ENCODE measurements at regions of chr14 and their contacts with region 1.

Region 1: DNA sequence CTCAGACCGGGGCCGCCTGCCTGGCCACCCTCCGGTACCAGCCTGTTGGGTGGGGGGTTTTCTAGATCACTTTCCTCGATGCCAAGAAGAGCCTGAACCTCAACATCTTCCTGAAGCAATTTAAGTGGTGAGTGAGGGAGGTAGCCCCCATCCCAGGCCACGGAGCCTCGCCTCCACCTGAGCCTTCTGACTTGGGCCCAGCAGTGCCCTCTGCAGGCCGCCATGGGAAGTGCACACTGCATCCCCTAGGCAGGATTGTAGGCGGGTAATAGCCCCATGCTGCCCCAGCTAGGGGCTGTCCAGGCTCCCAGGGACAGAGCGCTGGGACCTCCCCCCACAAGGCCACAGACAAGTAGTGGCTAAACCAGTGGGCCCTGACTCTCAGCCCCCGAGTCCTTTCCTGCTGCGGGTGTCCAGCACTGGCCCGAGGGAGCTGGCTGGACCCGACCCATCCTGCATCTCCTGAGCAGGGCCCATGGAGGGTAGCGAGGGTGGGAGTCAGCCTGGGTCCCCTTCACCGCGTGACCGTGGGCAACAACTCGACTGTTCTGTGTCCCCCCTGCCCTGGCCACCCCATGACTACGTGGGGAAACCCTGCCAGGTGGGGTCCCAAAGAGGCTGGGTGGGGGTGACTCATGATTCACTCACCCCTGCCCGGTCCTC is 15.3 kb upstream of the ADSS1 start:
- DNase-seq: peak in 1 of 2 donors; percentile 86
- H3K4me3 ChIP-seq: no peak overlapping the region
- H3K27ac ChIP-seq: peak overlapping the region; percentile 16 to 47
- H3K4me1 ChIP-seq: peaks cover 0 to 13% of the 10 kb centered on the region in 2 donors
- H3K27me3 ChIP-seq: no peaks in the 10 kb centered on the region
- CTCF ChIP-seq: peak; percentile 93 to 98 (median 98)

Region 2: GRCh38 chr14:102819176-102819628 is 1889.5 kb before region 1 on chr14:
- intact Hi-C with region 1: no loop called
- DNase-seq: no peak
- H3K4me3 ChIP-seq: no peak overlapping the region
- H3K27ac ChIP-seq: no peak overlapping the region
- H3K4me1 ChIP-seq: no peaks in the 10 kb centered on the region
- H3K27me3 ChIP-seq: no peaks in the 10 kb centered on the region
- CTCF ChIP-seq: no peak

Region 3: DNA sequence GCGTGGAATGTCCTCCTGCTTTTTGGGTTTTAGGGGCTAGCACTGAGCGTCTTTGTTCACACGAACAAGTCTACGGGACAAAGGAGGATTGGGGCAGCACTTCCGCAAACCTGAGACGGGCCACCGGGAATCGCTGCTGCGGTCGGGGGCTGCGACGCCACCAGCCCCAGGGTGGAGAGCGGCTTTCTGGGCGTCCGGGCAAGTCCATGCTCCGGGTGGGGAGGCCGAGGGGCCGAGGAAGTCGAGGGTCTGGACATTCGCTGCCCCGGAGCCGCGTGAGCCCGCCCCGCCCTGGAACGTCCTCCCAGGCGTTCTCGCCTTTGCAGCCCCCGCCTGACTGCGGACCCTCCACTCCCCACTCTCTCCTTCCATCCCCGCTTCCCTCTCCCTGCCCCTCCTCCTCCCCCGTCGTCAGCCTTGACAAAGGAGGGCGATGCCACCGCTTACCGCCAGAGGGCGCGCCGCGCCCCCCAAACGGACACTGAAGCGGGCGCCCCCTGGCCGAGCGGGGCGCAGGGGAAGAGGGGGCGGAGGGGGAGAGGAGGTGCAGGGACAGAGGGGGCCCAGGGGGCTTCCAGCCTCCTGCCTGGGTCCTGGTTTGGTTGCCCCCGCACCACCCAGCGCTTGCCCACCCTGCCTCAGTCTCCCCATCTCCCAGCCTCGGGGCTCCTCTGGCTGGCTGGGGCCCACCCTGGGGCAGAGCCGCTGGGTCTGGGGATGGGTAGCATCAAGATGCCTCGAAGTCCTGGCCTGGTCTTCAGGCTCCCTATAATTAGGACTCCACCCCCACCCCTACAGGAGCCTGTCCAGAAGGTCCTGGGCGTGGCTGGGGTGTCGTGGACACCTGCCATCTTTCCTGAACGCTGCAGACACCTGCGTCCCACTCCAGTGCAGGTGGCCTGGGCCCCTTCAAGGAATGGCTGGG is 58.4 kb before region 1 on chr14:
- intact Hi-C with region 1: loop called (anchors 1 kb)
- DNase-seq: peak in 1 of 2 donors; percentile 79
- H3K4me3 ChIP-seq: peak overlapping the region; percentile 51 to 64
- H3K27ac ChIP-seq: no peak overlapping the region
- H3K4me1 ChIP-seq: peaks cover 1 to 4% of the 10 kb centered on the region in 2 donors
- H3K27me3 ChIP-seq: no peaks in the 10 kb centered on the region
- CTCF ChIP-seq: peak; percentile 86 to 99 (median 98)

Region 4: DNA sequence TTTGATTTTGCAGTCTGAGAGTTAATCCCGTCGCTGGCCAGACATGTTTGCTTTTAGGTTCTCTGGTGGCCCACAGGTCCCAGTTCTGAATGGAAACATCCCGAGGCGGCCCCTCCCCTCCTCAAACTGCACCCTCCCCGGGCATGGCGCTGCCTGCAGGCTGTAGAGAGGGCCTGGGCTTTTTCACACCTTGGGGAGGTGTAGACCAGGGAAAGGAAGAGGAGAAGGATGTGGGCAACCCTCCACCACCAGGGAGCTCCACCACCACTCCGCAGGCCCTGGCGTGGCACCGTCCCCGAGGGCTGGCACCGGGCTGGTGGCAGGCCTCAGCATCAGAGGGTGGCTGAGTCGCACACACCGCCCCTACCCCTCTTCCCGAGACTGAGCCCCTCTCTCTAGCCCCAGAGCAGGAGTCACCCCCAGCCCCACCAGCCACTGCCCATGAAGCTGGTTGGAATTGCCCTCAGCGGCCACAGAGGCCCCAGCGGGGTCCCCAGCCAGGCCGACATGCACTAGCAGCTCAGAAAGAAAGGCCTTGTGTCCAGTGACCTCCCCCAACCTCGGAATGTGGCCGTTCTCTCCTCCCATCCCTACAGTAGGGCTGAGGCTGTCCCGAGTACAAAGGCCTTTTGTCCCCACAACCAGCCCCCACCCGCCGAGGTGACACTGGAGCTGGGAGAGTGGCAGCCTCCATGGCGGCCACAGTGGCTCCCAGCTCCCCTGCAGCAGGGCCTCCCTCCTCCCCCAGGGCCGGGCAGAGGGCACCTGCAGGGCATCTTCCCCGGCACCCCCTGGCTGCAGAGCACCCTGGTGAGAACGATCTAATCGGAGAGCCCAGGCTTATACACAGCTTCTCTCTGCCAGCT is 42.8 kb before region 1 on chr14:
- intact Hi-C with region 1: loop called (anchors 1 kb)
- DNase-seq: peak in 1 of 2 donors; percentile 74
- H3K4me3 ChIP-seq: no peak overlapping the region
- H3K27ac ChIP-seq: no peak overlapping the region
- H3K4me1 ChIP-seq: peaks cover 0 to 2% of the 10 kb centered on the region in 2 donors
- H3K27me3 ChIP-seq: no peaks in the 10 kb centered on the region
- CTCF ChIP-seq: peak; percentile 16 to 49 (median 34)

Region 5: DNA sequence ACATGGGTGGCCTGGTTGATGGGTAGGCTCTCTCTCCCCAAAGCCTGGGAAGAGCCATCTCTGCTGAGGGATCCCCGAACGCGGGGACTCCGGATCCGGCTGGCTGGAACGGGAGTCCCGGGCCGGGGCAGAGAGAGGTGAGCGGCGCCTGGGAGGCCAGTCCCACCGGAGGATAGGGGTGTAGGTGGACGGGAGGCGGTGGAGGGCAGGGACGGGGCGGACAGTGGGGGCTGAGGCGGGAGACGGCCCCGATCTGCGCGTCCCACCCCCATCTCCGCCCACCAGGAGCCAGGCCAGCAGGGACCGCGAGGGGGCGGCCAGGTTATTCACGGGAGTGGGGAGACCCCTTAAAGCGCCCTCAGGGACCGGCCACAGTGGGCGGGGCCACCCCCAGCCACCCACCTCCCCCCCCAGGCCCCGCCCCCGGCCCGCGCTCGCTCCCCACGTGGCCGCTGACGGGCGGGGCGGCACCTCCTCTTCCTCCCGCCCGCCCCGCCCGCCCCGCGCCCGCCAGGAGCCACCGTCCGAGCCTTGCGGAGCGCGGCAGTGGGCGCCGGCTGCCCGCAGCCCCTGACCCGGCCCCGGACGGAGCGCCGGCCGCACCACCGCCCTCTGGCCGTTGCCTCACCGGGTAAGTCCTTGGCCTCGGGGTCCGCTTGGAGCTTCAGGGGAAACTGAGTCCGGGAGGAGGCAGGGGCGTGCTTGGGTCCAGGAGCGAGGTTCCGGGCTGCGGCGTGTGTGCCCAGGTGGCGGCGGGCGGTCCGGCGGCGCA is 19.4 kb before region 1 on chr14 and contains the start of gene INF2:
- intact Hi-C with region 1: loop called (anchors 2 kb)
- DNase-seq: no peak
- H3K4me3 ChIP-seq: peak within 1 kb of the TSS; percentile 90 to 92
- H3K27ac ChIP-seq: peak within 1 kb of the TSS; percentile 80 to 82
- H3K4me1 ChIP-seq: peaks cover 17 to 39% of the 10 kb centered on the region in 2 donors
- H3K27me3 ChIP-seq: no peaks in the 10 kb centered on the region
- CTCF ChIP-seq: no peak
- total RNA-seq, gene INF2: 249 TPM

Region 6: GRCh38 chr14:104865644-104866441 is 157.1 kb after region 1 on chr14:
- intact Hi-C with region 1: no loop called
- DNase-seq: peak; percentile 18 to 88
- H3K4me3 ChIP-seq: peak overlapping the region; percentile 84 to 90
- H3K27ac ChIP-seq: peak overlapping the region; percentile 55 to 80
- H3K4me1 ChIP-seq: peaks cover 4 to 16% of the 10 kb centered on the region in 2 donors
- H3K27me3 ChIP-seq: no peaks in the 10 kb centered on the region
- CTCF ChIP-seq: no peak